Mammary epithelial cell (primary cell): ENCODE measurements at regions of chr9 and their contacts with region 1.

Region 1: GRCh38 chr9:100129772-100130171 is 30.7 kb downstream of the INVS start:
- DNase-seq: no peak
- H3K4me3 ChIP-seq: no peak overlapping the region
- H3K27ac ChIP-seq: no peak overlapping the region
- H3K4me1 ChIP-seq: no peaks in the 10 kb centered on the region
- H3K27me3 ChIP-seq: no peaks in the 10 kb centered on the region
- CTCF ChIP-seq: no peak

Region 2: DNA sequence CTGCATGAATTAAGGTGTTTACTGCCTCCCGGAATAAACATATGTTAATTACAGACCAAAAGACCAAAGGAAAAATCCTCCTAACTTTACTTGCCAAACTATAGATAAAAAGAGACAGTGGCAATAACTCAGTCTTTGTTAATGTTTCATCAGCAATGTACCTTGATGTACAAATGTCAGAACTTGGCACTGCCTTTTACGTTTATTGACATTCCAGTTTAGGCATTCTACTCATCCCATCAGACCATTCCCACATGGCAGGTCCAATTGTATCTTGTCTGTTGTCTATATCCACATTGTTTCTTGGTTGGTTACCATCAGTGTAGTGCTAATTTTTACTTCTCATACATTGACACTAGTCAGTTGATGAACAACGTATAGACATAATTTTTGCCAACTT is 137.4 kb after region 1 on chr9:
- CTCF ChIA-PET with region 1: no interaction called
- dilution Hi-C with region 1: no loop called
- in situ Hi-C with region 1: no loop called
- intact Hi-C with region 1: no loop called
- DNase-seq: no peak
- H3K4me3 ChIP-seq: no peak overlapping the region
- H3K27ac ChIP-seq: no peak overlapping the region
- H3K4me1 ChIP-seq: no peaks in the 10 kb centered on the region
- H3K27me3 ChIP-seq: no peaks in the 10 kb centered on the region
- CTCF ChIP-seq: no peak

Region 3: GRCh38 chr9:100277166-100277979 is 147.6 kb after region 1 on chr9:
- CTCF ChIA-PET with region 1: interaction called, 11 read pairs
- dilution Hi-C with region 1: no loop called
- in situ Hi-C with region 1: no loop called
- intact Hi-C with region 1: no loop called
- DNase-seq: peak; percentile 27
- H3K4me3 ChIP-seq: no peak overlapping the region
- H3K27ac ChIP-seq: no peak overlapping the region
- H3K4me1 ChIP-seq: no peaks in the 10 kb centered on the region
- H3K27me3 ChIP-seq: no peaks in the 10 kb centered on the region
- CTCF ChIP-seq: no peak